ENCODE measurements at regions of chr12 and their contacts with region 1.

Region 1: DNA sequence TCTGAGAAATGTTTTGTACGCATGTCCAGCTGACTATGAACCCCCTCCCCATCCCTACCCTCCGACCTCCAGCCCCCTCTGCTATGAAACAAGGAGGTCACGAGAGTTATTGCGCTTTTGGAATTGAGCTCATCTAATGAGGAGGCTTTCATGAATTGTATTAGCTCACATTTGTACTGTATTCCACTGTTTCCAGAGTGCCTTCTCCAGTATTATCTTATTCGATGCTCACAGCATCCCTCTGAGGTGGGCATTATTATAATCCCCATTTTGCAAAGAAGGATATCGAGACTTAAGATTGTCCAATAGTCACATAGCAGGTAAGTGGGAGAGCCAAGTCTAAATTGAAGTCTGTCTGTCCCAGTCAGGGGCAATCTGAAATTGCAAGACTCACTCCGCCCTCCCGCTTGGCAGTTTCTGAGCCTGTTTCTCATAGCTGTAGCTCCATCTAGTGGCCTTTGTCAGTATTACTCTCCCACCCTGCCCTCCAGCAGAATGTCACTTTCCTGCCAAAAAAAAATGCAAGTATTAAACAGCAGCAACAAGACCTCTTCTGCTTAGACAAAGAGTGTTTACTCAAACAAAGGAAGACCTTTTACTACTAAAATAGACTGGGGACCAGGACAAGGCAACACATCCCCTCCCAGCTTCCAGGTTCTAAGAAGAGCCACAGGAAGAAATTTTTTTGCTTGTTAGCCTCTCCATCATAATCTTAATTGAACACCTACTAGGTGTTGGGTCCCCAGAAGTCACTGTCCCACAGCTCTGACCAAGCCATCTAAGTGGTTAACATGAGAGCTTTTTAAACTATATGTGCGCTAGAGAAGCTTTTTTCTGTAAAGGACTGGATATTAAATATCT is 48.6 kb upstream of the TMEM233 start:
- DNase-seq: no peak
- ATAC-seq: peak; percentile 59

Region 2: GRCh38 chr12:118979763-118980406 is 565.1 kb before region 1 on chr12:
- intact Hi-C with region 1: loop called (anchors 2 kb)
- DNase-seq: peak; percentile 66
- ATAC-seq: no peak

Region 3: GRCh38 chr12:119444456-119445044 is 100.4 kb before region 1 on chr12:
- intact Hi-C with region 1: loop called (anchors 2 kb)
- DNase-seq: no peak
- ATAC-seq: peak; percentile 44

Region 4: DNA sequence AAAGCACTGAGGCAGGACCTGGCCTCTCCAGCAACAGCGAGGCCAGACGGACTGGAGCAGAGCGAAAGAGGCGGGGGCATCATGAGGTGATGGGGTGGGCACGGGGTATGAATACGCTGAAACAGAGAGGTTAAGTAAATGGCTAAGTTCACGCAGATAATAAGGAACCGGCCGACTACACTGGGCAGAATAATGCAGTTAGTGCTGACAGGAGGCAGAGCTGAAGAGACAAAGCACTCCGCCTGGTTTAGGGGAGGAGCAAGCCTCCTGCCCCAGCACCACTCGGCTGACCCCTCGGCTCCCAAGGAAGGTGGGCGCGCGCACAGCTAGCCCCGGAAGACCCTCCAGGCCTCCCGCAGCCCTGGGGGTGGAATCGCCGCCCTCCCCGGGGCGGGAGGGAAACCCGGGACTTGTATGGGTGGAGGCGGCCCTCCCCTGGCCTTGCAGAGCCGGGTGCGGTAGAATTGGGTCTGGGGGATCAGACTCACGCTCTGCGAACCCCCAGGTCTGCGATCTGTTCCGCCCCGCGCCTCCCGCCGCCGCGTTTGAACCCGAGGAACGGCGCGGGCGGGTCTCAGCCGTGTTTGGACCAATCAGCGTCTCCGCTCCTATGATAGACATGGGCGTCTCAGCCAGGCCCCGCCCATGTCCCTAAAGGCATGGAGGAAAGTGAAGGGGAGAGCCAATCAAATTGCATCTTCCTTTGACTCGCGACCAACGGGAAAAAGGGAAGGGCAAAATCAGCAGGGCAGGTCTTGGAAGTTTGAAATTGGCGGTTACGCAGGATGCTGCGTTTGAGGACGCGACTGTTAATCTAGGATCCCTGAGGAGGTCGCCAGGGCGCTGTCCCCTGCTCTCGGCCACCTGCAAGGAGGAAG is 332.0 kb after region 1 on chr12 and contains the start of gene CIT:
- intact Hi-C with region 1: no loop called
- DNase-seq: peak; percentile 94
- ATAC-seq: peak; percentile 100
- total RNA-seq, gene CIT: 1.1 TPM